ENCODE measurements at regions of chr4 and their contacts with region 1.

Region 1: GRCh38 chr4:80125252-80126177 is 52.5 kb upstream of the ANTXR2 start:
- DNase-seq: peak; percentile 17
- H3K4me3 Mint-ChIP-seq: peak overlapping the region; percentile 71
- H3K27ac Mint-ChIP-seq: peak overlapping the region; percentile 92
- H3K4me1 Mint-ChIP-seq: peaks cover 68% of the 10 kb centered on the region
- H3K27me3 Mint-ChIP-seq: no peaks in the 10 kb centered on the region

Region 2: DNA sequence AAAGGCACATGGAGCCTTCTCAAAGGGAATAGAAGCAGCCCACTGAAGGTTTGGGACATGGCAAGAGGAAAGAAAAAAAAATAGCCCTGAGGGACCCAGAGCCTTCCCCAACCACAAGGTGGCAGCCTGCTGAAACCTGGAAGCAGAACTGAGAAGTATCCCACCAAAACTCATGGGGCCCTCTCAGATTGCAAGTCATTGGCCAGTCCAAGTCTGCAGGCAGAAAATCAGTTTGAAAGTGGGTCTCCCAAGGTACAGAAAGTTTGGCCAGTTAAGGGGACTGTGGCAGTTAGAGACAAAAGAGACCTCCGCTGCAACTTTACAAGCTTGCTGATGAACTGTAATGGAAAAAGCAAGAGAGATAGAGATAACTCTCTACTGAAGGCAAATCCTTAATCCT is 208.3 kb before region 1 on chr4:
- intact Hi-C with region 1: loop called (anchors 5 kb)
- DNase-seq: peak; percentile 25
- H3K4me3 Mint-ChIP-seq: no peak overlapping the region
- H3K27ac Mint-ChIP-seq: no peak overlapping the region
- H3K4me1 Mint-ChIP-seq: peaks cover 36% of the 10 kb centered on the region
- H3K27me3 Mint-ChIP-seq: no peaks in the 10 kb centered on the region

Region 3: GRCh38 chr4:79949178-79949577 is 176.3 kb before region 1 on chr4:
- intact Hi-C with region 1: no loop called
- DNase-seq: no peak
- H3K4me3 Mint-ChIP-seq: no peak overlapping the region
- H3K27ac Mint-ChIP-seq: no peak overlapping the region
- H3K4me1 Mint-ChIP-seq: peaks cover 4% of the 10 kb centered on the region
- H3K27me3 Mint-ChIP-seq: no peaks in the 10 kb centered on the region

Region 4: GRCh38 chr4:80138551-80139538 is 13.3 kb after region 1 on chr4:
- intact Hi-C with region 1: loop called (anchors 1 kb)
- DNase-seq: peak; percentile 62
- H3K4me3 Mint-ChIP-seq: peak overlapping the region; percentile 62
- H3K27ac Mint-ChIP-seq: peak overlapping the region; percentile 88
- H3K4me1 Mint-ChIP-seq: peaks cover 72% of the 10 kb centered on the region
- H3K27me3 Mint-ChIP-seq: no peaks in the 10 kb centered on the region

Region 5: GRCh38 chr4:80173401-80173800 is 47.9 kb after region 1 on chr4:
- intact Hi-C with region 1: loop called (anchors 1 kb)
- DNase-seq: peak; percentile 66
- H3K4me3 Mint-ChIP-seq: peak overlapping the region; percentile 50
- H3K27ac Mint-ChIP-seq: peak overlapping the region; percentile 92
- H3K4me1 Mint-ChIP-seq: peaks cover 68% of the 10 kb centered on the region
- H3K27me3 Mint-ChIP-seq: no peaks in the 10 kb centered on the region

Region 6: GRCh38 chr4:80215449-80216052 is 90.0 kb after region 1 on chr4:
- intact Hi-C with region 1: loop called (anchors 1 kb)
- DNase-seq: no peak
- H3K4me3 Mint-ChIP-seq: no peak overlapping the region
- H3K27ac Mint-ChIP-seq: no peak overlapping the region
- H3K4me1 Mint-ChIP-seq: peaks cover 5% of the 10 kb centered on the region
- H3K27me3 Mint-ChIP-seq: peaks cover 45% of the 10 kb centered on the region

Measured in activated T-helper 1 cell treated with anti-CD3 and anti-CD28 coated beads, Interleukin-12 subunit alpha, Interleukin-12 subunit beta, Interleukin-2, Interleukin-4 antibody, amounts not matched to agents 30 ng/mL and 10 ng/mL and 1 ng/mL, durations not matched to agents 14 hours and 24 hours and 36 hours (primary cell).